CD4-positive, alpha-beta memory T cell (primary cell): ENCODE measurements at regions of chr1 and their contacts with region 1.

Region 1: GRCh38 chr1:226736908-226737818 is 1.9 kb downstream of the ITPKB start:
- DNase-seq: peak; percentile 58 to 69 (median 66)
- H3K4me3 ChIP-seq: peak overlapping the region; percentile 95 to 98
- H3K4me3 Mint-ChIP-seq: peak overlapping the region; percentile 90 to 99 (median 97)
- H3K27ac ChIP-seq: peak overlapping the region; percentile 85
- H3K27ac Mint-ChIP-seq: peak overlapping the region in 6 of 7 donors; percentile 70 to 100 (median 85)
- H3K4me1 ChIP-seq: peaks cover 49% of the 10 kb centered on the region
- H3K4me1 Mint-ChIP-seq: peaks cover 18 to 59% (median 33%) of the 10 kb centered on the region in 4 donors
- H3K27me3 ChIP-seq: no peaks in the 10 kb centered on the region
- H3K27me3 Mint-ChIP-seq: peaks cover 0 to 2% of the 10 kb centered on the region in 2 donors

Region 2: GRCh38 chr1:226634166-226634588 is 103.0 kb before region 1 on chr1:
- CTCF ChIA-PET with region 1: interaction called, 10 read pairs
- POLR2A ChIA-PET with region 1: interaction called, 15 read pairs
- intact Hi-C with region 1: loop called (anchors 1 kb)
- DNase-seq: peak; percentile 74 to 81 (median 78)
- H3K4me3 ChIP-seq: no peak overlapping the region
- H3K4me3 Mint-ChIP-seq: peak overlapping the region in 7 of 8 donors; percentile 1 to 82 (median 53)
- H3K27ac ChIP-seq: peak overlapping the region; percentile 56
- H3K27ac Mint-ChIP-seq: peak overlapping the region; percentile 72 to 94 (median 88)
- H3K4me1 ChIP-seq: peaks cover 53% of the 10 kb centered on the region
- H3K4me1 Mint-ChIP-seq: peaks cover 28 to 70% (median 53%) of the 10 kb centered on the region in 4 donors
- H3K27me3 ChIP-seq: no peaks in the 10 kb centered on the region
- H3K27me3 Mint-ChIP-seq: no peaks in the 10 kb centered on the region

Region 3: DNA sequence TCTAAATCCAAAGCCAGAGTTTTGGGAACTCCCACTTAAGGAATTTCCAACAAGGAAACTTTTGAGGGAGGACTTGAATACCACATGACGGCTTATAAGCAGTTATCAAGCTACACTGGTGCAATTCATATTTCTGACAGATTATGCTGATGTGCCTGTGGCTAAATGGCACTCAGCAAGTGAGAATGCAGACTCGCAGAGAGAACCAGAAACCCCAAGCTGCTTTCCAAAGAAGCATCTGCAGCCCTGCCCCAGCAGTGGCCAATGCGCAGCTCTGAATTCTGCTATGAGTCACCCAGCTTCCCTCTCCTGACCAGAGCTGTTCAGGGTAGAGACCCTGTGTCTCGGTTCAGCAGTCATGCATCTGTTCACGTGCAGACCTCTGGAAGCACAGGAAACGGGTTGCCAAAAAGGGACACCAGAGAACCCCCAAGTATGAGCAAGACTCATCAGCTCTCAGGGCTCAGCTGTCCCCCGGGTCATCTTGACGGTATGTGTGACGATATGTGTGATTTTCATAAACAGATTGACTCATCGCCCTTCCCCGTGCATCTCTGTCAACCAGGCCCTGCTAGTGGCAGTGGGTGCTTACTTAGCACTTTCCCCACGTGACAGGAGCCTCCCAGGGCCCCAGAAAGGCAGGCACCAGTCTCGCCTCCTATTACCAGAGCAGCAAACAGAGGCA is 74.4 kb before region 1 on chr1:
- CTCF ChIA-PET with region 1: no interaction called
- POLR2A ChIA-PET with region 1: interaction called, 42 read pairs
- intact Hi-C with region 1: loop called (anchors 2 kb)
- DNase-seq: peak; percentile 84 to 99 (median 86)
- H3K4me3 ChIP-seq: no peak overlapping the region
- H3K4me3 Mint-ChIP-seq: peak overlapping the region; percentile 57 to 88 (median 76)
- H3K27ac ChIP-seq: peak overlapping the region; percentile 74
- H3K27ac Mint-ChIP-seq: peak overlapping the region in 6 of 7 donors; percentile 96 to 99 (median 97)
- H3K4me1 ChIP-seq: no peaks in the 10 kb centered on the region
- H3K4me1 Mint-ChIP-seq: peaks cover 0 to 90% (median 38%) of the 10 kb centered on the region in 4 donors
- H3K27me3 ChIP-seq: no peaks in the 10 kb centered on the region
- H3K27me3 Mint-ChIP-seq: no peaks in the 10 kb centered on the region

Region 4: DNA sequence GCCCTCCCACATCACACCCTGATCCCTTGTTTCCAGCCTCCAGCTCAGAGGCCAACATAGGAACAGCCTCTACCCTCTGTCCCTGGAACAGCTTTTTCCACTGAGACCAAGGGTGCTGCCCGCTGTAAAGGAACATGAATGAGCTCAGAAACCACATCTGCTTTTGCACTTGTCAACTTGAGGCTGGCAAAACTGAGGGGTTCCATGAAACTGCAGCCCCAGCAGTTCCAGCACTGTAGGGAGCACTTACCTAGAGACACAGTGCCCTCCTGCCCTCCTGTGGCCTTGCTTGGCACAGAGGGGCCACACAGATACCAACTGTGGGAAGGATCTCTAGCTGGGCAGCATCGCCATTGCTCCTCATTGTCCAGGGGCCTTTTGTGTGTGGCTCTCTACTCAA is 49.7 kb before region 1 on chr1:
- CTCF ChIA-PET with region 1: interaction called, 4 read pairs
- POLR2A ChIA-PET with region 1: interaction called, 17 read pairs
- intact Hi-C with region 1: no loop called
- DNase-seq: peak; percentile 43 to 71 (median 52)
- H3K4me3 ChIP-seq: no peak overlapping the region
- H3K4me3 Mint-ChIP-seq: peak overlapping the region in 7 of 8 donors; percentile 21 to 70 (median 37)
- H3K27ac ChIP-seq: peak overlapping the region; percentile 89
- H3K27ac Mint-ChIP-seq: peak overlapping the region; percentile 94 to 99 (median 99)
- H3K4me1 ChIP-seq: peaks cover 100% of the 10 kb centered on the region
- H3K4me1 Mint-ChIP-seq: peaks cover 92 to 100% (median 97%) of the 10 kb centered on the region in 4 donors
- H3K27me3 ChIP-seq: no peaks in the 10 kb centered on the region
- H3K27me3 Mint-ChIP-seq: no peaks in the 10 kb centered on the region

Region 5: DNA sequence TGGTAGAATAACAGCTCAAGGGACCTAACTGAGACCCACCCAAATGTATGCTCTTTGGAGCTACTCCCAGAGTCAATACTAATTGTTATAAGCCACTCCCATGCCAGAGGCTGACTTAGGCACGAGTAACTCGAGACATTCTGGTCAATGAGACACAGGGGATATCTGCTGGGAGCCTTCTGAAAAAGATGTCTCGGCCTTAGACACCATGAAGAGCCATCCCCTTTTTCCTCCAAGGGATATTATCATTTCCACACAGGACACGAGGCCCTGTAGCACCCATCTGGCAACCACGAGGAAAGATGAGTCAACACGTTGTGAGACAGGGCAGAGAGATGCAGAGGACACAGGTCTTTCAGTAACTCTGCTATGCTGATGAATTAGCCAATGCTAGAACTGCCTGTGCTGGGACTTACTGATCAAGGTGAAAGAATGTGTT is 28.8 kb before region 1 on chr1:
- CTCF ChIA-PET with region 1: interaction called, 14 read pairs
- POLR2A ChIA-PET with region 1: no interaction called
- intact Hi-C with region 1: loop called (anchors 1 kb)
- DNase-seq: peak in 1 of 5 donors; percentile 69
- H3K4me3 ChIP-seq: no peak overlapping the region
- H3K4me3 Mint-ChIP-seq: peak overlapping the region in 7 of 8 donors; percentile 39 to 90 (median 71)
- H3K27ac ChIP-seq: peak overlapping the region; percentile 60
- H3K27ac Mint-ChIP-seq: peak overlapping the region; percentile 70 to 100 (median 92)
- H3K4me1 ChIP-seq: peaks cover 92% of the 10 kb centered on the region
- H3K4me1 Mint-ChIP-seq: peaks cover 70 to 97% (median 87%) of the 10 kb centered on the region in 4 donors
- H3K27me3 ChIP-seq: no peaks in the 10 kb centered on the region
- H3K27me3 Mint-ChIP-seq: peaks cover 2 to 3% of the 10 kb centered on the region in 2 donors

Region 6: DNA sequence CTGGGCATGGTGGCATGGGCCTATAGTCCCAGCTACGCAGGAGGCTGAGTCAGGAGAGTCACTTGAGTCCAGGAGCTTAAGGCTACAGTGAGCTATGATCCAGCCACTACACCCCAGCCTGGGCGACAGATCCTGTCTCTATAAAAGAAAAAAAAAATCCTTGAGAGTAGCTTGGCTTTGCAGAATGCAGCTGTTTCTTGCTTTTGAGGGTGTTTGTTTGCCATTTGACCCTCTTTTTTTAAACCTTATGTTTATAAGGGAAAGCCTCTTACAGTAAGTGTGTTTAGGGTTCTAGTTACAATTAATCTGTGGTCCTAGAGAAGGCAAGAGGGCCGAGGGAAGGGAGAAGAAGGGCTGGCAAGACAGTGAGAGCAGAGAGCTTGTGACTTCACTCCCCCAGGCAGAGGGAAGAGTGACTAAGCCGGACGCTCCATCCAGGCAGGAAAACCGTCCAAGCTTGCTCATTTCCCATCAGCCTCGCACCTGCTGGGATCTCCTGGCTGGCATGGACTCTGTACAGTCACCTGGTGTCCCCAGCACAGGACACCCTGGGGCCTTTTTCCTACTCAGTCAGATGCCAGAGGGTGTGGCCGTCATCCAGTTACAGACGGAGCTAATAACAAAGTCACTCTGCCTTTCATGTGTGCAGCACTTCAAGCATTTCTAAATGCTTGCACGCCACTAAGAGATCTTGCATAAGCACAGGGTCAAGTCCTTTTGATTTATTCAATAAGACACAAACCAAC is 77.8 kb after region 1 on chr1:
- CTCF ChIA-PET with region 1: no interaction called
- POLR2A ChIA-PET with region 1: interaction called, 14 read pairs
- intact Hi-C with region 1: no loop called
- DNase-seq: peak in 1 of 5 donors; percentile 9
- H3K4me3 ChIP-seq: no peak overlapping the region
- H3K4me3 Mint-ChIP-seq: peak overlapping the region in 1 of 8 donors; percentile 17
- H3K27ac ChIP-seq: no peak overlapping the region
- H3K27ac Mint-ChIP-seq: peak overlapping the region in 3 of 7 donors; percentile 10 to 53 (median 29)
- H3K4me1 ChIP-seq: peaks cover 11% of the 10 kb centered on the region
- H3K4me1 Mint-ChIP-seq: peaks cover 7 to 23% (median 12%) of the 10 kb centered on the region in 4 donors
- H3K27me3 ChIP-seq: no peaks in the 10 kb centered on the region
- H3K27me3 Mint-ChIP-seq: no peaks in the 10 kb centered on the region

Region 7: GRCh38 chr1:226940029-226940805 is 203.1 kb after region 1 on chr1 and contains the start of gene COQ8A:
- CTCF ChIA-PET with region 1: interaction called, 4 read pairs
- POLR2A ChIA-PET with region 1: interaction called, 8 read pairs
- intact Hi-C with region 1: loop called (anchors 2 kb)
- DNase-seq: peak; percentile 98 to 100 (median 99)
- H3K4me3 ChIP-seq: peak within 1 kb of the TSS; percentile 75 to 84
- H3K4me3 Mint-ChIP-seq: peak within 1 kb of the TSS; percentile 89 to 95 (median 92)
- H3K27ac ChIP-seq: peak within 1 kb of the TSS; percentile 87
- H3K27ac Mint-ChIP-seq: peak within 1 kb of the TSS; percentile 96 to 98 (median 97)
- H3K4me1 ChIP-seq: peaks cover 40% of the 10 kb centered on the region
- H3K4me1 Mint-ChIP-seq: peaks cover 31 to 67% (median 50%) of the 10 kb centered on the region in 4 donors
- H3K27me3 ChIP-seq: no peaks in the 10 kb centered on the region
- H3K27me3 Mint-ChIP-seq: peaks cover 0 to 2% of the 10 kb centered on the region in 2 donors
- total RNA-seq, gene COQ8A: 69.2 to 70.7 TPM